Gastrocnemius medialis (tissue), 4 donors: ENCODE measurements at regions of chr3 and their contacts with region 1.

Region 1: GRCh38 chr3:12984023-12984823 is 89.0 kb downstream of the IQSEC1 start:
- DNase-seq: peak in 1 of 2 donors; percentile 82
- ATAC-seq: peak; percentile 92 to 95
- H3K4me3 ChIP-seq: no peak overlapping the region
- H3K27ac ChIP-seq: peak overlapping the region; percentile 24 to 56 (median 30)
- H3K4me1 ChIP-seq: peaks cover 28 to 36% of the 10 kb centered on the region in 2 donors
- H3K27me3 ChIP-seq: no peaks in the 10 kb centered on the region
- CTCF ChIP-seq: peak; percentile 68 to 89 (median 84)
- POLR2A ChIP-seq: no peak

Region 2: DNA sequence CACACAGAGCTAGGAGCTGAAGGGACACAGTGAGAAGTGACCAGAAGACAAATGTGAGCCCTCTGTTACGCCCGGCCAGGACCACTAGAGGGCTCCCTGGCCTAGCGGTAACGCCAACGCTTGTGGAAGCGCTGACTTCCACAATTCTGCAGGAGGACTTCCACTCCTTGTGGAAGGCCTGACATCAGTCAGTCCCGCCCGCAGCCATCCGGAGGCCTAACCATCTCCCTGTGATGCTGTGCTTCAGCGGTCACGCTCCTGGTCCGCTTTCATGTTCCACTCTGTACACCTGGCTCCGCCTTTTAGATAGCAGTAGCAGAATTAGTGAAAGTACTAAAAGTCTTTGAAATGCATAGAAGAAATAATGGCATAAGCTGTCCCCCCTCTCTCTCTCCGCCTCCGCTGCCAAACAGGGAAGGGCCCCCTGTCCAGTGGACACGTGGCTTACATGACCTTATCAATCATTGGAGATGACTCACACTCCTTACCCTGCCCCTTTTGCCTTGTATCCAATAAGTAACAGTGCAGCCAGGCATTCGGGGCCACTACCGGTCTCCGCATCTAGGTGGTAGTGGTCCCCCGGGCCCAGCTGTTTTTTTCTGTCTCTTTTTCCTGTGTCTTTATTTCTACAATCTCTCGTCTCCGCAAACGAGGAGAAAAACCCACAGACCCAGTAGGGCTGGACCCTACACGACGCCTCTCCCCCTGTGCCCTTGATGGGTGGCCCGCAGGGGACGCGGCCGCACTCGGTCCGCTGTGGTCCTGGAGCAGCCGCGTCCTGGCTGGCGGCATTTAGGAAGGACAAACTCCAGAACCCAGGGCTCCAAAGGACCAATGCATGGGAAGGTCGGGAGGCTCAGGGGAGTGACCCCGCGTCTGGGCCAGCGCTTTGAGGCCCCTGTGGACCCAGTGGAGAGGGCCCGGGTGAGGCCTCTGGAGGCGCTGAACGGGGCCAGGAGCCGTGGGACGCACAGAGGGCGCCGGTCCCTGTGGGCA is 115.9 kb before region 1 on chr3:
- in situ Hi-C with region 1: no loop called
- intact Hi-C with region 1: loop called (anchors 1 kb)
- DNase-seq: peak; percentile 74 to 82
- ATAC-seq: peak; percentile 78 to 79
- H3K4me3 ChIP-seq: no peak overlapping the region
- H3K27ac ChIP-seq: no peak overlapping the region
- H3K4me1 ChIP-seq: peaks cover 21 to 28% of the 10 kb centered on the region in 2 donors
- H3K27me3 ChIP-seq: no peaks in the 10 kb centered on the region
- CTCF ChIP-seq: peak; percentile 82 to 94 (median 92)
- POLR2A ChIP-seq: no peak

Region 3: GRCh38 chr3:12891985-12892839 is 92.0 kb before region 1 on chr3:
- in situ Hi-C with region 1: loop called (anchors 10 to 25 kb)
- intact Hi-C with region 1: no loop called
- DNase-seq: peak; percentile 46 to 56
- ATAC-seq: peak in 1 of 2 donors; percentile 76
- H3K4me3 ChIP-seq: peak overlapping the region in 3 of 4 donors; percentile 18 to 33 (median 30)
- H3K27ac ChIP-seq: no peak overlapping the region
- H3K4me1 ChIP-seq: peaks cover 20 to 24% of the 10 kb centered on the region in 2 donors
- H3K27me3 ChIP-seq: no peaks in the 10 kb centered on the region
- CTCF ChIP-seq: peak; percentile 79 to 94 (median 87)
- POLR2A ChIP-seq: no peak

Region 4: DNA sequence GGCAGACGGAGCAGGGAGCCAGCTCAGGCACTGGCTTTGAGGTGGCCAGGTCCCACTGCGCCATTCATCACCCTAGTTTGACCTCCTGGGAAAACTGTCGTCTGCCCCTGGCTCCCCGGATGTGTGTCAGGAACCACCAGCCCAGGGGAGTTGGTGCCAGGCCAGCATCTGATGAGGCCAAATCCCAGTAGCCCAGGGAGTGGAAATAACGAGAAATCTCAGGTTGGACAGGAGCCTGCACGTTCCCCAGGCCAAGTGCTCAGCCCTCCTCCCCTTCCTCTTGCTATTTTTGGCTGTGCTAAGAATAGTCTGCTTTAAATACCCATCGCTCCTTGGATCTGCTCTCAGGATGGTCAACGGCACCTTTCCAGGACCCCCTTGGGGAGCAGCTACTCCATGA is 49.8 kb before region 1 on chr3:
- in situ Hi-C with region 1: loop called in 2 of 4 experiments (anchors 10 kb)
- intact Hi-C with region 1: no loop called
- DNase-seq: peak in 1 of 2 donors; percentile 62
- ATAC-seq: peak; percentile 49 to 62
- H3K4me3 ChIP-seq: peak overlapping the region in 1 of 4 donors; percentile 32
- H3K27ac ChIP-seq: peak overlapping the region; percentile 83 to 89 (median 84)
- H3K4me1 ChIP-seq: peaks cover 65 to 69% of the 10 kb centered on the region in 2 donors
- H3K27me3 ChIP-seq: no peaks in the 10 kb centered on the region
- CTCF ChIP-seq: no peak
- POLR2A ChIP-seq: no peak

Region 5: DNA sequence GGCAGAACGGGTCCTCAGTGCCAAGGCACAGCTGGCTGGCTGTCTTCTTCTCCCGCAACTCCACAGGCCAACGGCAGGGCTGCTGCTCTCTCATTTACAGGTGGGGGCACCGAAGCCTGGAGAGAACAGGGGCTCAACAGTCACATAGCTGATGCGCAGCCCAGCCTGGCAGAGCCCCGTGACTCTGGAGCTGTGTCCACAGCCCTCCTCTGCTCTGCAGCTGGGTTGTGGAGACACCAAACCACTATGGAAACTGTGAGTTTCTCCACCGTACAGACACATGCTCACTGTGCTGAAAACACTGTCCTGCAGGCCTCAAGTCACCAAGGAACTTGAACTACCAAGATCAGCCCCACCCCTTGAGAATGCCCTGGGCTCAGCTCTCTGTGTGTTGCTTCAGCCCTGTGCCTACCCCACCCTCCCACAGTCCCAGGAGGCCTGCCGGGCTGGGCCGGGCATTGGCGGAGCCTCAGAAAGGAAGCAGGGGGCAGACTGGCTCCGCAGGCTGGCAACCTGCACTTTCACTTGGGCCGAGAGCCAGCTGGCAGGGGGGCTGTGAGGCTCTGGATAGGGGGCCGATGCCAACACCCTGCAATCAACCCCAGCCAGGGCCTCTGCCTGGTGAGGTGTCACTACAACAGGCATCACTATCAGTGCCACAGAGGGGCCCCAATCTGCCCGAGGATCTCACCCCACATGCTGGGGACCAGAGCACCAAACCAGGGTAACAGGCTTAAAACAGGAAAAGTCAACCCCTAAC is 29.2 kb before region 1 on chr3:
- in situ Hi-C with region 1: no loop called
- intact Hi-C with region 1: loop called (anchors 1 kb)
- DNase-seq: peak; percentile 84 to 95
- ATAC-seq: peak; percentile 95
- H3K4me3 ChIP-seq: no peak overlapping the region
- H3K27ac ChIP-seq: peak overlapping the region; percentile 70 to 88 (median 80)
- H3K4me1 ChIP-seq: peaks cover 75 to 85% of the 10 kb centered on the region in 2 donors
- H3K27me3 ChIP-seq: no peaks in the 10 kb centered on the region
- CTCF ChIP-seq: peak in 4 of 5 experiments; percentile 3 to 52 (median 35)
- POLR2A ChIP-seq: peak in 1 of 2 donors; percentile 21

Region 6: DNA sequence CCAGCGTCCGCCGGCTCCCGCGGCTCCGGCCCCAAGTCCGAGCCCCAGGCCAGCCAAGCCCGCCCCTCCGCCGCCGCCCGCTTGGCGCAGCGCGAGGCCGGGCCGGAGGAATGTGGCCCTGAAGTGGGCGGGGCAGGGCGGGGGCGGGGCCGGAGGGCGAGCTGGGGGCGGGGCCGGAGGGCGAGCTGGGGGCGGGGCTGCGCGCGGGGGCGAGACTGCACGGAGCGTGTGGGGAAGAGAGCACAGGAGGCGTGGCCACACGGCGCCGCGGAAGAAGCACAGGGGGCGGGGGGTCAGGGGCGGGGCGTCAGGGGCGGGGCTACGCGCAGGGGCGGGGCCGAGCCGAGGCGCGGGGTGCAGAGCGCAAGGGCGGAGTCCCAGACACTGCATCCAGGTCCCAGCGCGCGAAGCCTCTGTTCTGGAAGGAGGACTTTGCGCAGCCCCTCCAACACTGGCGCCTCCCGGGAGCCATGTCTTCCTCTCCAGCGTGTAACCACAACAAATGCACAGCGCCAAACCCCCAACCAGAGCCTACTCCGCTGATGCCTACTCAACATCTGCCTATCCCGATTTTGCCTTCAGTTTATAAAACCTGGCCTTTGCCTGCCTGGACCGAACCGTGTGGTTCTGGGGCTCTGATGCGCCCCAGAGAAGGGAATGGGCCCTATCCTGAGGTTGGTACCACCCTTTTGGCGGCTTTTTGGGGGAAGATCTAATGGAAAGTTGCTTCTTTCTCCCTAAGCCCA is 16.4 kb before region 1 on chr3:
- in situ Hi-C with region 1: no loop called
- intact Hi-C with region 1: loop called (anchors 2 kb)
- DNase-seq: peak; percentile 89 to 90
- ATAC-seq: peak; percentile 53 to 65
- H3K4me3 ChIP-seq: peak overlapping the region; percentile 59 to 82 (median 69)
- H3K27ac ChIP-seq: peak overlapping the region; percentile 70 to 90 (median 82)
- H3K4me1 ChIP-seq: peaks cover 78 to 84% of the 10 kb centered on the region in 2 donors
- H3K27me3 ChIP-seq: no peaks in the 10 kb centered on the region
- CTCF ChIP-seq: no peak
- POLR2A ChIP-seq: peak in 1 of 2 donors; percentile 44